Dorsolateral prefrontal cortex (tissue), 120 donors: ENCODE measurements at regions of chr2 and their contacts with region 1.

Region 1: DNA sequence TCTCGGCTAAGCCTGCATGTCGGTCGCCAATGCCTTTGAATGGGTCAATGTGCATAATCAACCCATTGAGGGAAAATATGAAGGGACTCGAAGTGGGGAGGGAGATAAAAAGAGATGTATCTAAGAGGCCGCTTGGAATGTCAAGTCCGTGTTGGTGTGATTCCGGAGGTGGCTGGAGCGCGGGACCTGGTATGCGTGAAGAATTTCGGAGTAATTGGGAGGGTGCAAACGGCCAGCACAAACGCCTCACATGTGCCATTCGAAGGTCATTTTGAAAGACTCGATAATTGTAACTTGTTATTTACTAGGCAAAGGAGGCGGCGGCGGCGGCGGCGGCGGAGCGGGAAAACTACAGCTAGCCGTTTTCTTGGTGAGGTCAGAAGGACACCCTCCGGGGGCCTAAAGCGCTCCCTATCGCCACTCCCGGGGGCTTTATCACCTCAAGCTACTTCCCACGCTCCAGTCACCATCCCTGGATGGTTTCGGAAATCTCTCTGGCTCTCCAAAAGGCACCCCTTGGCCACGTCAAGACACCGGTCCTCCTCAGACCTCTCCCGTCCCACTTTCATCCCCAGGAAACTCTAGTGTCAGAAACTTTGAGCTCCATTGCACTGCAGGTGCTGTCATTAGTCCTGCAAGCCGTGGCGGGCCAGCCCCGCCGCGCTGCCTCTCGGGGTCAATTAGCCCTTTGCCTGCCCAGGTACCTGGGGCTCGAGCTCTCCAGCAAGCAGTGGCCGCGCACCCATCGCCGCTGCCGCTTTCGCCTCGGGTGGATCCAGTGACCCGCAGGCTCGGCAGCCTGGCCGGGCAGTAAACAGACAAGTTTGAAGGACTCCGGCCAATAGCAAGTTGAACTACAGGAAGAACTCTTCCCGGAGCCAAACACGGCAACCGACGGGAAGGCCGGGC is 1.5 kb downstream of the ERBB4 start:
- DNase-seq: peak in 4 of 10 donors; percentile 15 to 55 (median 42)
- H3K4me3 ChIP-seq: peak overlapping the region; percentile 39 to 89 (median 75)
- H3K27ac ChIP-seq: peak overlapping the region in 56 of 59 donors; percentile 15 to 88 (median 72)
- H3K27me3 ChIP-seq: peaks cover 0 to 35% (median 8%) of the 10 kb centered on the region in 45 donors
- CTCF ChIP-seq: peak in 6 of 56 donors; percentile 1 to 10 (median 4)

Region 2: GRCh38 chr2:211745295-211746097 is 791.6 kb before region 1 on chr2:
- intact Hi-C with region 1: loop called (anchors 10 kb)
- DNase-seq: peak in 8 of 10 donors; percentile 34 to 65 (median 52)
- H3K4me3 ChIP-seq: peak overlapping the region in 1 of 59 donors; percentile 11
- H3K27ac ChIP-seq: peak overlapping the region in 5 of 59 donors; percentile 62 to 76 (median 74)
- H3K27me3 ChIP-seq: no peaks in the 10 kb centered on the region
- CTCF ChIP-seq: peak; percentile 69 to 94 (median 84)

Region 3: DNA sequence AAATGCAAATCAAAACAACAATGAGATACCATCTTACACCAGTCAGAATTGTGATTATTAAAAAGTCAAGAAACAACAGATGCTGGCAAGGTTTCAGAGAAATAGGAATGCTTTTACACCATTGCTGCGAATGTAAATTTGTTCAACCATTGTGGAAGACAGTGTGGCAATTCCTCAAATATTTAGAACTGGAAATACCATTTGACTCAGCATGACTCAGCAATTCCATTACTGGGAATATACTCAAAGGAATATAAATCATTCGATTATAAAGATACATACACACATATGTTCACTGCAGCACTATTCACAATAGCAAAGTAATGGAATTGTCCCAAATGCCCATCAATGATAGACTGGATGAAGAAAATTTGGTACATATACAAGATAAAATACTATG is 515.1 kb before region 1 on chr2:
- intact Hi-C with region 1: loop called in 1 of 2 experiments (anchors 10 kb)
- DNase-seq: no peak
- H3K4me3 ChIP-seq: no peak overlapping the region
- H3K27ac ChIP-seq: no peak overlapping the region
- H3K27me3 ChIP-seq: no peaks in the 10 kb centered on the region
- CTCF ChIP-seq: no peak

Region 4: DNA sequence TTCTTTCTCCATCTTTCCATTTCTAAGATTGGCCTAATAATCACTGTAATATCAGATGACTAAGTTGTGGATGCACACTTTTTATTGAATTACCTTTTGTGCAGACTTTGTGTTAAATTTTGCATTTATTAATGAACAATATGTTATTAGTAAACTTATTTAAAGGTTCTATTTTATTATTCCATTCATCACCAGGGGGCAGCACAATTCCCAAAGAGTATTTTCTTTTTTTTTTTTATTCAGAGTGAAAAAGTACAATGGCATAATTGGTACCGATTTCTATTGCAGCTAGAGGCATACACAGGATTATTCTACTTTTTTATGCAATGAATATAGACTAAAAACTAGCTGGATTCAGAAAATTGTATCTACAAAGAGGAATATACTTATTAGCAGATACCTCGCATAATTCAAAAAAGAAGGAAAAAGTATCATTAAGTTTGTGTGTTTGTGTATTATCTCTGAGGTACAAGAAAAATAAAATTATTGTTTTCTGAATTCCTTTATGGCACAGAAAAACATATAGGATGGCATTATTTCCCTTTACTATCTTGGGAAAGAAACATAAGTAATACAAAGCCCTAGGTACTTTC is 389.1 kb before region 1 on chr2:
- intact Hi-C with region 1: loop called in 1 of 2 experiments (anchors 10 kb)
- DNase-seq: no peak
- H3K4me3 ChIP-seq: no peak overlapping the region
- H3K27ac ChIP-seq: no peak overlapping the region
- H3K27me3 ChIP-seq: no peaks in the 10 kb centered on the region
- CTCF ChIP-seq: peak; percentile 24 to 81 (median 56)

Region 5: DNA sequence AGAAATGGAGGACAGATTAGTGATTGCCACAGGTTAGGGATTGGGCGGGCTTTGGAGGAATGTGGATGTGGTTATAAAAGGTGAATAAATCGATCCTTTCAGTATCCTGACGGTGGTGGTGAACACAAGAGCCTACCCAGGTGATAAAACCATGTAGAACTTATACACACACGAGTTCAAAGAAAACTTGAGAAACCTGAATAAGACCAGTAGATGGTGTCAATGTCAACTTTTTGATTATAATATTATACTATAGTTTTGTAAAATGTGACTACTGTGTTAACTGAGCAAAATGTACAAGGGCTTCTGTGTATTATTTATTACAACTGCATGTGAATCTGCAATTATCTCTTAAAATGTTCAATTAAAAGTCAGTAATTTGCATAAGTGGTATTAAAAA is 134.8 kb before region 1 on chr2:
- intact Hi-C with region 1: loop called in 1 of 2 experiments (anchors 10 kb)
- DNase-seq: no peak
- H3K4me3 ChIP-seq: no peak overlapping the region
- H3K27ac ChIP-seq: no peak overlapping the region
- H3K27me3 ChIP-seq: no peaks in the 10 kb centered on the region
- CTCF ChIP-seq: peak in 19 of 56 donors; percentile 8 to 53 (median 24)

Region 6: GRCh38 chr2:212414767-212415211 is 122.3 kb before region 1 on chr2:
- intact Hi-C with region 1: loop called (anchors 5 to 10 kb)
- DNase-seq: no peak
- H3K4me3 ChIP-seq: peak overlapping the region in 40 of 59 donors; percentile 0 to 51 (median 24)
- H3K27ac ChIP-seq: peak overlapping the region in 45 of 59 donors; percentile 12 to 90 (median 62)
- H3K27me3 ChIP-seq: no peaks in the 10 kb centered on the region
- CTCF ChIP-seq: no peak